ENCODE measurements at regions of chr3 and their contacts with region 1.

Region 1: GRCh38 chr3:122074621-122075265 is 19.6 kb downstream of the CD86 start:
- DNase-seq: peak; percentile 49
- CTCF ChIP-seq: no peak

Region 2: GRCh38 chr3:120983841-120984240 is 1090.9 kb before region 1 on chr3:
- in situ Hi-C with region 1: no loop called
- DNase-seq: no peak
- CTCF ChIP-seq: no peak

Region 3: DNA sequence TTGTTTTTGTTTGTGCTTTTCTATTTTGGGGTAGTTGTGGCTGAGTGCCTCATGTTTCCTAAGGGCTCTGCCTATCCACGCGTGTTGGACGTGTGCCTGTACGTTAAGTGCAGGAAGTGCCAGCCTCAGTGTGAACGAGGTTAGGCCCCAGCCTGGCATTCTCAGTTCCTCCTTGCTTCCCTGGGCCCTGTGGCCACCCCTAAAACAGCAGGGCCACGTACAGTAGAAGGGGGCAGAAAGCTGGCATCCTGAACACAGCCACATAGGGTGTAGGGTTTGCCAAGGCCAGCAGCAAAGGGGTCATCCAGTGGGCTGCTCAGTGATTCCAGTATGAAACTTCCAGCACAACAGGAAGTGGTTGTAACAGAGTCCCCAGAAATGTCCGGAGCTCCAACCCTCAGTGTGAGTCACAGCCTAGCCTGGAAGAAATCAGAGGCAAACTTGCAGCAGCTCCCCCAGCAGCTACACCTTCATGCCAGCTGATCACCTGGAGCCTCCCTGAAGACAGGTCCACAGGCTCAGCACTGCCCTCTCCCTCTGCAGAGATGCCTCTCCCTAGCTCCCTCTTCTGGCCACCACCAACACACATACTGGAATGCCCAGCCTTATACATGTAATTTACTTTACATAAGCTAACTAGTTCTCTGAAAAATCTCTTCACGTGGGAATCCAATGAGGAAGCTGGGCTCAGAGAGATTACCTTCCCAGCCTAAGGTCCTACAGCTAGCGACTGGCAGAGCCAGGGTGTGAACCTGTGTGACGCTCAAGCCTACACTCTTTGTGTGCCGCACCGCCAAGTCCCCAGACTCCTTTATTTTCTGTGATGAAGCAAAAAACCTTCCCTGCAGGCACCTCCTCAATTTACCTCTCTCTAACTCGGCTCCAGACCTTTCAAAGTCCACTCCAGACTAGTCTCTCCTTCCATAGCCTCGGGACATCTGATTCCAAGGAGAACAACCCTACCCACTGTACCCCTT is 79.3 kb before region 1 on chr3:
- in situ Hi-C with region 1: loop called (anchors 10 kb)
- DNase-seq: no peak
- CTCF ChIP-seq: peak; percentile 83